CD14-positive monocyte (primary cell): ENCODE measurements at regions of chr6 and their contacts with region 1.

Region 1: GRCh38 chr6:119349323-119350042 is at the start of gene MAN1A1:
- DNase-seq: peak; percentile 76 to 83 (median 81)
- H3K4me3 ChIP-seq: peak within 1 kb of the TSS; percentile 95 to 96 (median 95)
- H3K4me3 Mint-ChIP-seq: peak within 1 kb of the TSS; percentile 95 to 96
- H3K27ac ChIP-seq: peak within 1 kb of the TSS; percentile 83 to 91
- H3K27ac Mint-ChIP-seq: peak within 1 kb of the TSS; percentile 86 to 93 (median 90)
- H3K4me1 ChIP-seq: peaks cover 42 to 50% of the 10 kb centered on the region in 2 donors
- H3K4me1 Mint-ChIP-seq: peaks cover 56% of the 10 kb centered on the region
- H3K27me3 ChIP-seq: no peaks in the 10 kb centered on the region
- H3K27me3 Mint-ChIP-seq: peaks cover 3 to 8% (median 5%) of the 10 kb centered on the region in 3 donors
- CTCF ChIP-seq: no peak
- polyA plus RNA-seq, gene MAN1A1: 11.0 to 20.4 (median 16.1) TPM

Region 2: DNA sequence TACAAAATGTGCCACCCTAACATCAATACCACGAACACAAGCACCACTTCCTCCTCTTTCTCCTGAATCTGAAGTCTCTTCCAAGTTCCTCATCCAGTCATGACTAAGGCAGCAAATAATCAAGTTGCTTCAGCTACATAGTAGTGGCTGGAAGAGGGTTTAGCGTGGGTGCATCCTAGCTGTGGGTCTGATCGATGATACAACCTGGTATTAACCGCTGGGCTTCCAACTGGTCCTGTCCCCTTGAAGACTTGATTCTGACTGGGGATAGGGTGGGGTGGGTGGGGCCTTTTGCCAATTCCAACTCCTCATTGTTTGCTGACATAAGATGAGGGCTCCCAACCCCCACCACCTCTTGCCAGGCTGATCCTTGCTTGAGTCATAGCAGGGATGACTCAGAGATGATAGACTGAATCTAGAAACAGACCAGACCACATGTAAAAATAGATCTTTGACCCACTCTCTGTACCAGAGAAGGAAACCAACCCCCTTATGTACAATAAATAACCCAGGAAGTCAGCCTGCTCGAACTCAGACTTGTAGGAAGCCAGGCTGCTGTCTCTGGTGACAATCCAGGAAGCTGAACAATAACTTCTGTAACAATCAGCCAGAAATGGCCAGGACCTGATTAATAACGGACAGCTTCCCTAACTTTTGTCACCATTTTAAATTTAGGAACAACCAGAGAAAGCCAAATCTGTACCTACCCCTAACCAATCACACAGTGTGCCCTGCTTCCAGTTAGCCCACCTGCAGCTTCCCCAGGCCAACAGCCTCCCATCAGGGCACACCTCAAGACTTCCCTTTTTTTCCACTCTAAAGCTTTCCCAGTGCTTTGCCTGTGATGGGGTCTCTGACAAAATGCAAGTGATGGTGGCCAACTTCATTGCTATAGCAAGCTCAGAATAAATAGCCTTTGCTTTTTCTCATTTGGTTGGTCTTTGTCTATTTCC is 202.1 kb before region 1 on chr6:
- intact Hi-C with region 1: loop called in 1 of 2 experiments (anchors 5 kb)
- DNase-seq: peak; percentile 86 to 91 (median 90)
- H3K4me3 ChIP-seq: peak overlapping the region in 1 of 3 experiments; percentile 40
- H3K4me3 Mint-ChIP-seq: peak overlapping the region; percentile 31 to 76
- H3K27ac ChIP-seq: peak overlapping the region; percentile 68 to 77
- H3K27ac Mint-ChIP-seq: peak overlapping the region; percentile 83 to 92 (median 89)
- H3K4me1 ChIP-seq: peaks cover 27 to 28% of the 10 kb centered on the region in 2 donors
- H3K4me1 Mint-ChIP-seq: peaks cover 30% of the 10 kb centered on the region
- H3K27me3 ChIP-seq: no peaks in the 10 kb centered on the region
- H3K27me3 Mint-ChIP-seq: peaks cover 0 to 4% (median 2%) of the 10 kb centered on the region in 3 donors
- CTCF ChIP-seq: no peak

Region 3: GRCh38 chr6:119586250-119586882 is 236.9 kb after region 1 on chr6:
- intact Hi-C with region 1: no loop called
- DNase-seq: no peak
- H3K4me3 ChIP-seq: no peak overlapping the region
- H3K4me3 Mint-ChIP-seq: no peak overlapping the region
- H3K27ac ChIP-seq: no peak overlapping the region
- H3K27ac Mint-ChIP-seq: no peak overlapping the region
- H3K4me1 ChIP-seq: no peaks in the 10 kb centered on the region
- H3K4me1 Mint-ChIP-seq: no peaks in the 10 kb centered on the region
- H3K27me3 ChIP-seq: no peaks in the 10 kb centered on the region
- H3K27me3 Mint-ChIP-seq: no peaks in the 10 kb centered on the region
- CTCF ChIP-seq: no peak

Region 4: GRCh38 chr6:119643876-119644275 is 294.4 kb after region 1 on chr6:
- intact Hi-C with region 1: no loop called
- DNase-seq: no peak
- H3K4me3 ChIP-seq: no peak overlapping the region
- H3K4me3 Mint-ChIP-seq: no peak overlapping the region
- H3K27ac ChIP-seq: no peak overlapping the region
- H3K27ac Mint-ChIP-seq: peak overlapping the region in 1 of 7 donors; percentile 27
- H3K4me1 ChIP-seq: peaks cover 7% of the 10 kb centered on the region in 2 donors
- H3K4me1 Mint-ChIP-seq: peaks cover 11% of the 10 kb centered on the region
- H3K27me3 ChIP-seq: no peaks in the 10 kb centered on the region
- H3K27me3 Mint-ChIP-seq: peaks cover 0 to 1% (median 0%) of the 10 kb centered on the region in 3 donors
- CTCF ChIP-seq: no peak